Uterus (tissue), 4 donors: ENCODE measurements at regions of chr2 and their contacts with region 1.

Region 1: GRCh38 chr2:229431327-229431954 is 160.4 kb upstream of the PID1 start:
- DNase-seq: no peak
- H3K4me3 ChIP-seq: no peak overlapping the region
- H3K27ac ChIP-seq: peak overlapping the region; percentile 27 to 65
- H3K4me1 ChIP-seq: no peaks in the 10 kb centered on the region
- H3K27me3 ChIP-seq: no peaks in the 10 kb centered on the region
- CTCF ChIP-seq: peak; percentile 36 to 59 (median 49)
- POLR2A ChIP-seq: no peak

Region 2: GRCh38 chr2:228303946-228304345 is 1127.5 kb before region 1 on chr2:
- intact Hi-C with region 1: loop called (anchors 10 kb)
- DNase-seq: no peak
- H3K4me3 ChIP-seq: no peak overlapping the region
- H3K27ac ChIP-seq: no peak overlapping the region
- H3K4me1 ChIP-seq: no peaks in the 10 kb centered on the region
- H3K27me3 ChIP-seq: no peaks in the 10 kb centered on the region
- CTCF ChIP-seq: no peak
- POLR2A ChIP-seq: no peak